ENCODE measurements at regions of chr14 and their contacts with region 1.

Region 1: DNA sequence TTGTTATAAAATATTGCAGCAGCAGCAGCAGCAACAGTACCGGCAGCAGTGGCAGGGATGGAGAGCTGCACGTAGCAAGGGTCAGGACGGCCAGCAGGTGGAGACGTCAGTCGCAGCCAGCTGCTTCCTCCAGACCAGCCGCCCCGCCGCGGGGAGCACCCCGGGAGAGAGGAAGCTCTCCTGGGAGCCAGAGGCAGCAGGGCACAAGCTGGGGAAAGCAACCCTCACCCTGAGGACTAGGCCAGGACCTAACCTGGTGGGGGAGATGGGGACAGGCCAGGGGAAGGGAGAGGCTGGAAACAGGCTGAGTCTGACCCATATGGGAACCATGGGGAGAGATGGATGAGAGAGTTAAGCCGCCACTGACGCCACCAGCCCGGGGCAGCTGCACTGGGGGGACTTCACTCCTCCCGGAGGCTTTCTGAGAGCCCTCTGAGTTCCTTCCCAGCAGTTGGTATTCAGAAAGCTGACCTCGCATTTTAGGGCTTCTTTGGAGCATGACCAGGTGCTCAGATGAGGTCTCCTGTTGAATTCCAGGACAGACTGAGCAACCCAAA is 56.3 kb downstream of the SPTB start:
- DNase-seq: peak; percentile 61 to 71 (median 70)
- H3K4me3 ChIP-seq: no peak overlapping the region
- H3K4me3 Mint-ChIP-seq: peak overlapping the region in 1 of 2 donors; percentile 71
- H3K27ac ChIP-seq: no peak overlapping the region
- H3K27ac Mint-ChIP-seq: no peak overlapping the region
- H3K4me1 ChIP-seq: peaks cover 18 to 21% of the 10 kb centered on the region in 2 donors
- H3K4me1 Mint-ChIP-seq: peaks cover 30% of the 10 kb centered on the region
- H3K27me3 ChIP-seq: peaks cover 0 to 5% of the 10 kb centered on the region in 2 donors
- H3K27me3 Mint-ChIP-seq: peaks cover 12 to 16% (median 13%) of the 10 kb centered on the region in 3 donors
- CTCF ChIP-seq: peak; percentile 86

Region 2: DNA sequence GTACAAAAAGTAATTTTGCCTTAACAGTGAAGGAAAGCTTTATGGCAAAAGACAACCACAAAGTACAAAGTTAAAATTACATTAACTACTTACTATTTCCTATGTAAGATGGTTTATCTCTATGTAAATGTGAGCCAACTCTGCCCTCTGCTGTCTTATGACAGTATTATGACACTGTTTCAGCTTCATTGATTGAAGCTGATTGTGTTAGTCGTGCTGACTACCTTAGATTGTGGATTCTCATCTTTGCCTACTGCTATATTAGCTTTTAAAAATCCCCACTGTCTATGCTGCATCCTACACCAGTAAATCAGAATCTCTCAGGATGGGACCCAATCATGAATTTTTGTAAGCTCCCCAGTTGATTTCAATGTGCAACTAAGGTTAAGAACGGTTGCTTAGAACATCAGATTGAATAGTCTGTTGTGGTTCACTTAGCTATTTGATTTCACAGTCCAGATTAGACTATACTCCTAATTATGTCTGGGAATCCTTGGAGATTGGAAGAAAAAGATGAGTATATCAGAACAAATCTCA is 68.5 kb after region 1 on chr14:
- intact Hi-C with region 1: loop called (anchors 5 kb)
- DNase-seq: peak in 2 of 3 donors; percentile 45 to 59
- H3K4me3 ChIP-seq: no peak overlapping the region
- H3K4me3 Mint-ChIP-seq: no peak overlapping the region
- H3K27ac ChIP-seq: no peak overlapping the region
- H3K27ac Mint-ChIP-seq: no peak overlapping the region
- H3K4me1 ChIP-seq: no peaks in the 10 kb centered on the region
- H3K4me1 Mint-ChIP-seq: no peaks in the 10 kb centered on the region
- H3K27me3 ChIP-seq: peaks cover 0 to 9% of the 10 kb centered on the region in 2 donors
- H3K27me3 Mint-ChIP-seq: peaks cover 9 to 19% (median 12%) of the 10 kb centered on the region in 3 donors
- CTCF ChIP-seq: peak; percentile 69

Region 3: DNA sequence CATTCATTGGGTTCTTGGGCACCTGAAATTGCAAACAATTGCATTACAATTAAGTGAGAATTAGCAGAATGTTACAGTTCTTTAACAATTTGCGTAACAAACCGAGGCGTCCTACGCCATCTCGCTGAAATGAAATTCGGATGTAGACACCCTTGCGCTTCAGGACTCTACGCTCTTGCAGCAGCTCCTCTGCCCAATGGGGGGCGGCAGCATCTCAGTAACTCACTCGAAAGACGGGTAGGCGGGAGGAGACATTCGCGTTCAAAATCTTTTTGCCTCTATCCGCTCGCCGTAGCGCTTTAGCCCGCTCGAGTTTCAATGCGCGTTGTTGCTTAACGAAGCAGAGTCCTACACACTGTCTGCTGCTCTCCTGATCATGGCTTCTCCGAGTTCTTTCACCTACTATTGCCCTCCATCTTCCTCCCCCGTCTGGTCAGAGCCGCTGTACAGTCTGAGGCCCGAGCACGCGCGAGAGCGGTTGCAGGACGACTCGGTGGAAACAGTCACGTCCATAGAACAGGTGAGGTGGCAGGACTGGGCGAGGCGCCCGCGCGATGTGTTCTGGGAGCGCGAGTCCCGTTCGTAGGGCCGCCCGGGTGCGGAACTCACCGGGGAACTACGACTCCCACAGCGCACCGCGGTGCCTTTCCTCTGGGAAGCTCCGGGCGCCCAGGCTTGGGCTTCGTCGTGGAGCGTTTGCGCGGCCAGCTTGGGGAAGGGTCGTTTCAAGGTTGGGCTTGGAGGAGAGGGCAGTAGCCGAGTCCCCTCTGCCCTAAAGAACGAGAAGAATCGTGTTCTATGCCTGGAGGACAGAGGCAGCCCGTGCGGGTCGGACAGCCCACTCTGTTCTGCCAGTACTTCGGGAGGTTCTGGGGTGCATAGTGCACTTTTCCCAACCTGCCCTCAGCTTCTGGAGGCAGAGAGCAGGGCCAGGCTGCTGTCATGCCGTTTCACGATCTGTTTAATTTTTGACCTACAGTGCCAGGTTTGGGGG is 163.5 kb after region 1 on chr14 and contains the start of gene FNTB:
- intact Hi-C with region 1: loop called in 1 of 2 experiments (anchors 10 kb)
- DNase-seq: peak; percentile 88 to 93 (median 91)
- H3K4me3 ChIP-seq: peak within 1 kb of the TSS; percentile 76 to 97 (median 82)
- H3K4me3 Mint-ChIP-seq: peak within 1 kb of the TSS; percentile 100
- H3K27ac ChIP-seq: peak within 1 kb of the TSS; percentile 57 to 83
- H3K27ac Mint-ChIP-seq: peak within 1 kb of the TSS; percentile 95 to 99 (median 97)
- H3K4me1 ChIP-seq: peaks cover 42 to 56% of the 10 kb centered on the region in 2 donors
- H3K4me1 Mint-ChIP-seq: peaks cover 53% of the 10 kb centered on the region
- H3K27me3 ChIP-seq: no peaks in the 10 kb centered on the region
- H3K27me3 Mint-ChIP-seq: peaks cover 1 to 14% (median 3%) of the 10 kb centered on the region in 3 donors
- CTCF ChIP-seq: no peak
- polyA plus RNA-seq, gene FNTB: 12.3 to 14.2 (median 14.1) TPM

Measured in CD14-positive monocyte (primary cell).